Panc1 (cell line): ENCODE measurements at regions of chr11 and their contacts with region 1.

Region 1: GRCh38 chr11:2768471-2769408 is 68.9 kb upstream of the KCNQ1OT1 start:
- DNase-seq: no peak
- ATAC-seq: peak; percentile 41; the same call in 1 of the 2 replicates
- H3K4me3 ChIP-seq: no peak overlapping the region
- H3K27ac ChIP-seq: no peak overlapping the region
- H3K4me1 ChIP-seq: no peaks in the 10 kb centered on the region
- H3K27me3 ChIP-seq: peaks cover 13% of the 10 kb centered on the region; the same call in 1 of the 2 replicates
- CTCF ChIP-seq: no peak

Region 2: GRCh38 chr11:2724653-2725367 is 43.9 kb before region 1 on chr11:
- CTCF ChIA-PET with region 1: no interaction called
- POLR2A ChIA-PET with region 1: no interaction called
- in situ Hi-C with region 1: loop called (anchors 5 kb)
- intact Hi-C with region 1: no loop called
- DNase-seq: no peak
- ATAC-seq: no peak
- H3K4me3 ChIP-seq: no peak overlapping the region
- H3K27ac ChIP-seq: no peak overlapping the region
- H3K4me1 ChIP-seq: peaks cover 3% of the 10 kb centered on the region; the same call in 1 of the 2 replicates
- H3K27me3 ChIP-seq: no peaks in the 10 kb centered on the region
- CTCF ChIP-seq: no peak

Region 3: GRCh38 chr11:2799881-2800654 is 31.3 kb after region 1 on chr11:
- CTCF ChIA-PET with region 1: no interaction called
- POLR2A ChIA-PET with region 1: no interaction called
- in situ Hi-C with region 1: no loop called
- intact Hi-C with region 1: no loop called
- DNase-seq: no peak
- ATAC-seq: no peak
- H3K4me3 ChIP-seq: no peak overlapping the region
- H3K27ac ChIP-seq: no peak overlapping the region
- H3K4me1 ChIP-seq: no peaks in the 10 kb centered on the region
- H3K27me3 ChIP-seq: no peaks in the 10 kb centered on the region
- CTCF ChIP-seq: no peak